Activated CD4-positive, alpha-beta T cell treated with anti-CD3 and anti-CD28 coated beads, Interleukin-2, amount 10 ng/mL, durations not matched to agents 24 days and 14 days (primary cell): ENCODE measurements at regions of chr1 and their contacts with region 1.

Region 1: GRCh38 chr1:40264354-40264781 is 6.3 kb downstream of the ZMPSTE24 start:
- DNase-seq: no peak
- H3K4me3 Mint-ChIP-seq: peak overlapping the region; percentile 57
- H3K27ac Mint-ChIP-seq: peak overlapping the region; percentile 88
- H3K4me1 Mint-ChIP-seq: peaks cover 43% of the 10 kb centered on the region
- H3K27me3 Mint-ChIP-seq: no peaks in the 10 kb centered on the region

Region 2: GRCh38 chr1:40122855-40123254 is 141.5 kb before region 1 on chr1:
- intact Hi-C with region 1: no loop called
- DNase-seq: no peak
- H3K4me3 Mint-ChIP-seq: no peak overlapping the region
- H3K27ac Mint-ChIP-seq: no peak overlapping the region
- H3K4me1 Mint-ChIP-seq: no peaks in the 10 kb centered on the region
- H3K27me3 Mint-ChIP-seq: peaks cover 23% of the 10 kb centered on the region

Region 3: DNA sequence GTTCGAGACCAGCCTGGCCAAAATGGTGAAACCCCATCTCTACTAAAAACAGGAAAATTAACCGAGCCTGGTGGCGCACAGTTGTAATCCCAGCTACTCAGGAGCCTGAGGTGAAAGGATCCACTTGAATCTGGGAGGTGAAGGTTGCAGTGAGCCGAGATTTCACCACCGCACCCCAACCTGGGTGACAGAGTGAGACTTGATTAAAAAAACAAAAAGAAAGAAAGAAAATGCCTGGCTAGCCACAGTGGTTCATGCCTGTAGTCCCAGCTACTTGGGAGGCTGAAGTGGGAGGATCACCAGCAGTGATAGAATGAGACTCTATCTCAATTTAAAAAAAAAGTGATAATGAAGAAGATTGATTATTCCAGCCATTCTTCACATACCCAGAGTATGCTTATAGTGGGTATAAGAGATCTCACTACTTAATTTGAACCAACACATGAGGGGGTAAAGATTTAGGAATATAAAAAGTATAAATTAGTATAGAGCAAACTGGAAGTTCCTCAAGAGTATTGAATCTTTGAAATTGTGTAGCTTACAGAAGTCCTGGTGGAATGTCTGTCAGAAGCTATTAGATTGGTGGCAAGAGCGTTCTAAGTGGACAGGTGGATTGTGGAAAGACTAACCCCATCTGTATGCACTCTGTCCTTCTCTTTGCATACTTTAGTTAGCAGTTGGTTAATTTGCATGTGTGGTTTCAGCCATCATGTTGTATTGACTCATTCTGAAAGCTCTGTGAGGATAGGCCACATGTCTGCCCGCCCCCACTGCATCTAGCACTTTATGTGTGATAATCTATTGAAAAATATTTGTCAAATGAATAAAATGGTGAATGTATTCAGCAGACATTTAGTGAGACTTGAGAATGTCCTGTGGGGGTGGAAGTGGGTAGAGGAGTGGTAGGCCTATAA is 78.2 kb before region 1 on chr1:
- intact Hi-C with region 1: loop called (anchors 2 kb)
- DNase-seq: peak; percentile 82
- H3K4me3 Mint-ChIP-seq: peak overlapping the region; percentile 64
- H3K27ac Mint-ChIP-seq: peak overlapping the region; percentile 85
- H3K4me1 Mint-ChIP-seq: peaks cover 47% of the 10 kb centered on the region
- H3K27me3 Mint-ChIP-seq: no peaks in the 10 kb centered on the region

Region 4: DNA sequence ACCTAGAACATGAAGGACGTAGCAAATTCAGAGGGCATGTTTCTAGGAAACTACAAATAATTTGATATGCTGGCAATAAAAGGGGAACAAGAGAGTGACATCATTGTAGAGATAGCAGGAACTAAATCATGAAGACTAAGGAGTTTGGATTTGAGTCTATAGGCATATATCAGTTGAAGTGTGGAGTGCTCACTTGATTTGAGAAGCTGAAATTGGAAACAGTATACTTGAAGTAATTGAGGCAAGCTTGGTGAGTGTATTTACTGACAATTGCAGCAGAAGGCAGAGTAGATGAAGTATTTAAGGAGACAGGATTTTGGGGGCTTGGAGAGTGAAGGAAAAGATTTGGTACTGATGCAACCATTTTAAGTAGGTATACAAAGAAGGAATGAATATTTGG is 23.0 kb before region 1 on chr1:
- intact Hi-C with region 1: loop called (anchors 1 kb)
- DNase-seq: no peak
- H3K4me3 Mint-ChIP-seq: peak overlapping the region; percentile 54
- H3K27ac Mint-ChIP-seq: peak overlapping the region; percentile 87
- H3K4me1 Mint-ChIP-seq: peaks cover 57% of the 10 kb centered on the region
- H3K27me3 Mint-ChIP-seq: no peaks in the 10 kb centered on the region

Region 5: DNA sequence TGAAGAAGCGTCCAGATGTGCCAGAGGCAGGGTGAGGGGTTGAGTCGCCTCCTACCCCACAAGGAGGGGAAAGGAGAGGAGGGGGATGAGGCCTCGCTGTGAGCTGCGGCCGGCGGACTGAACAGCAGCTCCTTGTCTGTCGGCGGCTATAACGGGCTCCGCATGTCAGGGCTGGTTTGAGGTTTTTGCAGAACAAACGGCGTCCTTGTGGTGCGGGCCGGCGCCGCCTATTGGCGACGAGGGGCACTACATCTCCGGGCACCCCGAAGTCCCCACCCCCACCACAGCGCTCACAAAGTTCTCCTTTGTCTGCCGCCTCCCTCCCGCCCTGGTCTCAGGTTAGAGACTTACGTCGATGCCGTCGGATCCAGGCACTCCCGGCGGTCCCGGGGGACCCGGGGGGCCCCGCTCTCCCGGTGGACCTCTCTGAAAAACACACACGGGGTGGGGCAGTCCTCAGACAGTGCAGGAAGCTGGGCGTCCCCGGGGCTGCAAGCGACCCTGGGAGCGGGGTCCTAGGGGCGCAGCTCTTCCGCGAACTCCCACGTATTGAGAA is 50.9 kb after region 1 on chr1:
- intact Hi-C with region 1: loop called (anchors 2 kb)
- DNase-seq: peak; percentile 95
- H3K4me3 Mint-ChIP-seq: peak overlapping the region; percentile 80
- H3K27ac Mint-ChIP-seq: peak overlapping the region; percentile 41
- H3K4me1 Mint-ChIP-seq: peaks cover 47% of the 10 kb centered on the region
- H3K27me3 Mint-ChIP-seq: peaks cover 24% of the 10 kb centered on the region

Region 6: GRCh38 chr1:40404670-40405462 is 140.5 kb after region 1 on chr1:
- intact Hi-C with region 1: loop called (anchors 5 kb)
- DNase-seq: peak; percentile 82
- H3K4me3 Mint-ChIP-seq: peak overlapping the region; percentile 77
- H3K27ac Mint-ChIP-seq: peak overlapping the region; percentile 95
- H3K4me1 Mint-ChIP-seq: peaks cover 50% of the 10 kb centered on the region
- H3K27me3 Mint-ChIP-seq: no peaks in the 10 kb centered on the region

Region 7: DNA sequence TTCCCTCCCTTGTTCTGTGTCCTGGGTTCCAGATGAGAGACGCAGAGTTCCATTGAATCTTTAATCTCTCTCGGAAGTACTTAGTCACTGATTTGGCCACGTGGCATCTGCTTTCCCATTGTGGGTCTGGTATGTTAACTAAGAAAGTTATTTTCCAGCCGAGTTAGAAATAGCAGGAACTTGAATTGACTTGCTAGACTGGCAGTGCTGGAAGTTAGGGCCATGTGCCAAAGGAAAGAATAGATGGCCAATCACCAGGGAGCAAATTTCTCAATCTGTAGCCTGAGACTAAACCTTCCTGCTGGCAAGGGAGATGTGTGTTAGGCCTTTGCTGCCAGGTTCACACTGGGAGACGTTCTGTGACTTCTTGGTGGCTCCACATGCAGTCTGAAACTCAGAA is 781.4 kb after region 1 on chr1:
- intact Hi-C with region 1: no loop called
- DNase-seq: no peak
- H3K4me3 Mint-ChIP-seq: no peak overlapping the region
- H3K27ac Mint-ChIP-seq: no peak overlapping the region
- H3K4me1 Mint-ChIP-seq: peaks cover 8% of the 10 kb centered on the region
- H3K27me3 Mint-ChIP-seq: no peaks in the 10 kb centered on the region